Activated naive CD4-positive, alpha-beta T cell treated with anti-CD3 and anti-CD28 coated beads for 36 hours (primary cell): ENCODE measurements at regions of chr9 and their contacts with region 1.

Region 1: GRCh38 chr9:124708633-124709291 is 62.3 kb downstream of the NR6A1 start:
- DNase-seq: no peak
- H3K4me3 Mint-ChIP-seq: no peak overlapping the region
- H3K27ac Mint-ChIP-seq: no peak overlapping the region
- H3K4me1 Mint-ChIP-seq: no peaks in the 10 kb centered on the region
- H3K27me3 Mint-ChIP-seq: peaks cover 3% of the 10 kb centered on the region

Region 2: GRCh38 chr9:124110307-124110915 is 598.4 kb before region 1 on chr9:
- CTCF ChIA-PET with region 1: no interaction called
- intact Hi-C with region 1: no loop called
- DNase-seq: peak; percentile 71
- H3K4me3 Mint-ChIP-seq: no peak overlapping the region
- H3K27ac Mint-ChIP-seq: no peak overlapping the region
- H3K4me1 Mint-ChIP-seq: no peaks in the 10 kb centered on the region
- H3K27me3 Mint-ChIP-seq: peaks cover 31% of the 10 kb centered on the region

Region 3: GRCh38 chr9:124415102-124415851 is 293.5 kb before region 1 on chr9 and contains the start of gene PSMB7:
- CTCF ChIA-PET with region 1: no interaction called
- intact Hi-C with region 1: loop called (anchors 1 kb)
- DNase-seq: peak; percentile 99
- H3K4me3 Mint-ChIP-seq: peak within 1 kb of the TSS; percentile 95
- H3K27ac Mint-ChIP-seq: peak within 1 kb of the TSS; percentile 83
- H3K4me1 Mint-ChIP-seq: peaks cover 38% of the 10 kb centered on the region
- H3K27me3 Mint-ChIP-seq: no peaks in the 10 kb centered on the region
- total RNA-seq, gene PSMB7: 161 to 167 TPM

Region 4: GRCh38 chr9:124537926-124538325 is 170.8 kb before region 1 on chr9:
- CTCF ChIA-PET with region 1: interaction called, 3 read pairs
- intact Hi-C with region 1: loop called (anchors 1 kb)
- DNase-seq: no peak
- H3K4me3 Mint-ChIP-seq: no peak overlapping the region
- H3K27ac Mint-ChIP-seq: no peak overlapping the region
- H3K4me1 Mint-ChIP-seq: no peaks in the 10 kb centered on the region
- H3K27me3 Mint-ChIP-seq: no peaks in the 10 kb centered on the region

Region 5: GRCh38 chr9:124658165-124659017 is 50.4 kb before region 1 on chr9:
- CTCF ChIA-PET with region 1: interaction called, 4 read pairs
- intact Hi-C with region 1: loop called (anchors 2 kb)
- DNase-seq: peak; percentile 75
- H3K4me3 Mint-ChIP-seq: peak overlapping the region; percentile 95
- H3K27ac Mint-ChIP-seq: peak overlapping the region; percentile 89
- H3K4me1 Mint-ChIP-seq: peaks cover 11% of the 10 kb centered on the region
- H3K27me3 Mint-ChIP-seq: no peaks in the 10 kb centered on the region

Region 6: DNA sequence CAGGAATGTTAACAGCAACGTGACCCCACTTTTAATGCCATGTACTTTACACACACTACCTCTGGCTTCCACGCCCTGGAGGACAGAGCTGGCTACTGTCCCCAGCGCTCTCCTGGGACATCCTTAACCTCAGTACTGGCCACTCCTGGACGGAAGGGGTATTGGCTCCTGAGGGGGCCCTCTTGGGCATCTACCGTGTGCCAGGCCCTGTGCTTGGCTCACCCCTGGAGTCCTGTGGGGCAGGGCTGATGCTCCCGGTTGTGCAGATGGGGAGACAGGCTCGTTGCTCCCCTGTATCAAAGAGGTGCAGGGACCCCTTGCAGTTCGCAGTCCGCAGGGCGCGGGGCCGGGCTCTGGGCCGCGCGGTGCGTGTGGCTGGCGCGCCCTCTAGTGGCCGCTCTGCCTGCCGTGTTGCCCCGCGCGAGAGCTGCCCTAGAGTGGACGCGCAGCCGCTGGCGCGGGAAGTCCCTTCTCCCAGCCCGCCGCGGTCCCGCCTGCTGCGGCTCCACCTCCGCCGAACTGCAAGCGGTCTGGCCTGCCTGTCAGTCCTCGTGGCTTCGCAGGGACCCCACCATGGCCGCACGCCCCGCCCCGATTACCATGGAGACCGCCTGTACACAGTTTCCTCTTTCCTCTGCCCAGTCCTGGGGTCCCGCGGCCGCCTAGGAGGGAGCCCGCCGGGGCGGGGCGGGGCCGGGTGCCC is 144.2 kb after region 1 on chr9 and contains the start of gene WDR38:
- CTCF ChIA-PET with region 1: interaction called, 8 read pairs
- intact Hi-C with region 1: loop called (anchors 2 kb)
- DNase-seq: peak; percentile 83
- H3K4me3 Mint-ChIP-seq: peak within 1 kb of the TSS; percentile 64
- H3K27ac Mint-ChIP-seq: no peak within 1 kb of the TSS
- H3K4me1 Mint-ChIP-seq: peaks cover 20% of the 10 kb centered on the region
- H3K27me3 Mint-ChIP-seq: peaks cover 3% of the 10 kb centered on the region
- total RNA-seq, gene WDR38: not detected